Activated B cell treated with CpG ODN at 0.5 μM for 24 hours (primary cell): ENCODE measurements at regions of chr12 and their contacts with region 1.

Region 1: GRCh38 chr12:24537083-24537860 is 411.6 kb downstream of the BCAT1 start:
- DNase-seq: no peak
- ATAC-seq: no peak
- H3K4me3 Mint-ChIP-seq: no peak overlapping the region
- H3K27ac Mint-ChIP-seq: no peak overlapping the region
- H3K4me1 Mint-ChIP-seq: peaks cover 16% of the 10 kb centered on the region
- H3K27me3 Mint-ChIP-seq: no peaks in the 10 kb centered on the region
- CTCF ChIP-seq: no peak

Region 2: DNA sequence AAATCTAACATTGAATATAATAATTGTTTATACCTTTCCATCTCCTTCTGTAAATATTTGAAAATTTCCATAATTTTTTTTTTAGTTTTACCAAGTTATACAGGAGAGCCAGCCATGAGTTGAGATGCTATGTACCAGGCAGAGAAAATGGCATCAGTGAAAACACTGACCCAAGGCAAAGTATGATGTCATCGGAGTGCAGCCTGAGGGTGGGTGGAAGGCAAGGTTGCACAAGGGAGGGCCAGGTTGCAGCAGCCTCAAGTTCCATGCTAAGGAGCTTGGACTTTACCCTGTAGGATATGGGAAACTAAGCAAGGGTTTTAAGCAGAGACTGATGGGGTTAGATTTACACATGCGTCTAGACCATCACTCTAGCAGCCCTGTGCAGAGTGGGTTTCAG is 29.4 kb before region 1 on chr12:
- CTCF ChIA-PET with region 1: no interaction called
- POLR2A ChIA-PET with region 1: no interaction called
- intact Hi-C with region 1: loop called (anchors 1 kb)
- DNase-seq: no peak
- ATAC-seq: no peak
- H3K4me3 Mint-ChIP-seq: no peak overlapping the region
- H3K27ac Mint-ChIP-seq: no peak overlapping the region
- H3K4me1 Mint-ChIP-seq: peaks cover 10% of the 10 kb centered on the region
- H3K27me3 Mint-ChIP-seq: no peaks in the 10 kb centered on the region
- CTCF ChIP-seq: no peak

Region 3: DNA sequence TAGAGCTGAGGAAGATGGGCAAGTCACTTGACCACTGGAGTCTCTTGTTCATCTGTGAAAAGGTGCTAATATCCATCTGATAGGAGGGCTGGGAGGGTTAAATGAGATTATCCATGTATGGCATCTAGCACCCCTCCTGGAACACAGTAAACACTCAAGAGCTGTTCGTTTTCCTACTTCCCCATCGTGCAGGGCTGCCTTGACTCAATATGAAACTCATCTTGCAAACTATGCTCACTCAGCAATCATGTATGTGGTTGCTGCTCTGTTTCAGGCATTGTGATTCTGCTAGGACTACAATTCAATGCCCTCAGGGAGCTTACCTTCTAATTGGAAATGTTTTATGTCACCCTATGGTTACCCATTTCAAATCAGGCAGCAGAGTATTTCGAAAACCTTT is 16.0 kb after region 1 on chr12:
- CTCF ChIA-PET with region 1: no interaction called
- POLR2A ChIA-PET with region 1: no interaction called
- intact Hi-C with region 1: loop called (anchors 2 kb)
- DNase-seq: no peak
- ATAC-seq: peak; percentile 75
- H3K4me3 Mint-ChIP-seq: no peak overlapping the region
- H3K27ac Mint-ChIP-seq: peak overlapping the region; percentile 13
- H3K4me1 Mint-ChIP-seq: peaks cover 6% of the 10 kb centered on the region
- H3K27me3 Mint-ChIP-seq: no peaks in the 10 kb centered on the region
- CTCF ChIP-seq: no peak